ENCODE measurements at regions of chr5 and their contacts with region 1.

Region 1: DNA sequence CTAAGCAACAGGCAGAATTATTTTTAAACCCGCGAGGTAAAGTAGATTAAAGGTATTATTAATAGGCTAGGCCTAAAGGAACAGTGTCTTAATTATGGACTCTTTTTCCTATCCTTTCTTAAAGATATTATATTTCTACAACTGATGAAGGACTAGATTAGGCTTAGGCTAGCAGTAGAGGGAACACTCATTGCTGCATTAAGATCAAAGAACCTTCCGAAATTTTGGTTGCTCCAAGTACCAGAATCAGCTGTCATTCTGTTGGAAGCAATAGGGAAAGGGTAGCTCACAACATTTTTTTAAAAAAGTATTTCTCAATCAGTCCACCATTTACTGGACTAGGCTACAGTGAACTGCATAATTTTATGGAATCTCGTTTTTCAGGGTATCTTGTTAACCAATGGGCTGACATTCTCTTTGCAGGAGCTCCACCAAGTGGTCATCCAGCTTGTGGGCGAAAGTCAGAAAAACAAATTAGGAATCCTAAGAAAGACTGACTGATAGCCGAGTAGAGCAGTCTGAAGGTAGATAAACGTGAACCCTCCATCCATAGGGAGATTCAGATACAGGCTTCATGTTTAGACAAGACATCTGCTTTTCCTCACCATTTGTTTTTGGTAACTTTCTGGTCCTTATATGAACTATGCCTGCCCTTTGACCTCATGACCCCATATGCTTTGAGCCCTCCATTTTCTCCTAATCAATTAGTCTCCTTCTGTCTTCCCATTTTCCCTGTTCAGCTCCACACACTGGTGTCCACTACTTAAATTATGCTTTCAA is 103.6 kb upstream of the CHD1 start:
- DNase-seq: peak; percentile 52 to 85 (median 67)
- H3K4me3 ChIP-seq: peak overlapping the region in 1 of 4 donors; percentile 42
- H3K27ac ChIP-seq: peak overlapping the region in 2 of 5 donors; percentile 30 to 36
- H3K4me1 ChIP-seq: peaks cover 0 to 4% of the 10 kb centered on the region in 2 donors
- H3K27me3 ChIP-seq: no peaks in the 10 kb centered on the region
- CTCF ChIP-seq: peak; percentile 44 to 82 (median 77)
- POLR2A ChIP-seq: no peak

Region 2: DNA sequence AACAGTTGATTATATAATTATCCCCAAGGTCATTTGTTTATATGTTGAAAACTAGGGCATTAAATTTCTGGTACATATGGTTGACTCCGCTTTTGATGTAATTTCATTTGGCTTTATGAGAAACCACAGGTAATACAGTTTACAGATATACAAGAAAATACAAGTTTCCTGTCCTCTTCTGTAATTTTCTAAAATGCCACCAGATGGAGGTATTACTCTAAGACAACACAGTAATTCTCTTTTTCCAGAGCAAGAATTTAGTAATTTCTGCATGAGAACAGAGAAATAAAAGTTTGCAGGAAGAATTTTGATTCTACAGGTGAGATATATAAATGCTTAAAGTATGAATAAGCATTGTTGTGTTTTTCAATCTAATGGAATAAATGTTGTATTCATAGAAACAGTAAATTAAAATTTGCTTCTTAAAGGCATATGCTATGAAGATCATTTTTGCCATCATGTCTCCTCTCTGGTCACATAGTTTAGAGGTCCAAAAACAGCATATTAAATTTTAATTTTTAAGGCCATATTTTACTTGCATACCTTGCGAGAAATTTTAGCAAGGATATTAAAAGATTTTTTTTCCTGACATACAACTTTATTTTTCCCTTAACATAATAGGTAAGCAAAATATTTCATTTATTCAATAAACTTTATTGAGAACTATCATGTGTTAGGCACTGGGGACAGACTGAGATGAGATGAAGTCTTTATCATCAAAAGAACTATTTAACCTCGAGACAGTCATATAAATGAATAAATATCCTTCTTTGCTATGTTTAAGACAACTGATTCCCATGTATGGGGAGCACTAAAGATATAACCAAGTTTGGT is 126.3 kb before region 1 on chr5:
- intact Hi-C with region 1: loop called (anchors 5 to 10 kb)
- DNase-seq: no peak
- H3K4me3 ChIP-seq: no peak overlapping the region
- H3K27ac ChIP-seq: no peak overlapping the region
- H3K4me1 ChIP-seq: peaks cover 0 to 13% of the 10 kb centered on the region in 2 donors
- H3K27me3 ChIP-seq: no peaks in the 10 kb centered on the region
- CTCF ChIP-seq: peak; percentile 70 to 91 (median 80)
- POLR2A ChIP-seq: no peak

Region 3: DNA sequence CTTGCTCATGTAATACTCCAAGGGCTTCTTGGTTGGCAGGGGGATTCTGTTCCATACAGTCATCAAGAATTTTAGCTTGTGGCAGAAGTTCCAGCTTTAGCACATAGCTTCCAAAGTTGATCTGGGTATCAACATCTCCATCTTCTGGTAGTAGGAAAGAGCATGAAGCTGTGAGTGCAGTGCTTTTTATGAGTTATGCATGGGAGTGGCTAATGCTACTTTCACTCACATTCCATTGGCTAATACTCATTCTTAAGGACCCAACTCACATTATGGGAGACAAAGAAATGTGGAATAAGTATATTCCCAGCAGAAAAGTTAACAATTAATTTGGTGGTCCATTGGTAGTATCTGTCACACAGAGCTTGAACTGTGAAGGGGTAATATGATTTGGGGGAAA is 90.6 kb after region 1 on chr5:
- intact Hi-C with region 1: no loop called
- DNase-seq: no peak
- H3K4me3 ChIP-seq: no peak overlapping the region
- H3K27ac ChIP-seq: no peak overlapping the region
- H3K4me1 ChIP-seq: no peaks in the 10 kb centered on the region
- H3K27me3 ChIP-seq: no peaks in the 10 kb centered on the region
- CTCF ChIP-seq: no peak
- POLR2A ChIP-seq: no peak

Region 4: DNA sequence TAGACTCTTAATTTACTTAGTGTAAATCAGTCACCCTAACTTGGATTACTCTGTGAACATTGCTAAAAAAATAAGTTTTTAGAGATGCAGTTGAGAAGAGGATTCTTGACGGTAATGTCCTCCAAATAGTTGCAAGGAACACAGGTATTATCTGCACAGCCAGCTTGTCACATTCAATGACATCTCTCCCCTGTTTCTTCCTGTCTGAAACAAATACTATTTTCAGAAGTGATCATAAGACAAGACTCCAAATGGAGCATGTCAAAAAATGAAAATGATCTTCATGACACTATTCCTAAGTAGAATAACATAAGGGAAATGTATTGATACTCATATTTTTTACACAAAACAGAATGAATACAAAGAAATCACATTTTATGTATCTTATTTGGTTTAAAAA is 124.3 kb after region 1 on chr5:
- intact Hi-C with region 1: no loop called
- DNase-seq: no peak
- H3K4me3 ChIP-seq: no peak overlapping the region
- H3K27ac ChIP-seq: no peak overlapping the region
- H3K4me1 ChIP-seq: no peaks in the 10 kb centered on the region
- H3K27me3 ChIP-seq: no peaks in the 10 kb centered on the region
- CTCF ChIP-seq: no peak
- POLR2A ChIP-seq: no peak